Calu3 (cell line): ENCODE measurements at regions of chr22 and their contacts with region 1.

Region 1: DNA sequence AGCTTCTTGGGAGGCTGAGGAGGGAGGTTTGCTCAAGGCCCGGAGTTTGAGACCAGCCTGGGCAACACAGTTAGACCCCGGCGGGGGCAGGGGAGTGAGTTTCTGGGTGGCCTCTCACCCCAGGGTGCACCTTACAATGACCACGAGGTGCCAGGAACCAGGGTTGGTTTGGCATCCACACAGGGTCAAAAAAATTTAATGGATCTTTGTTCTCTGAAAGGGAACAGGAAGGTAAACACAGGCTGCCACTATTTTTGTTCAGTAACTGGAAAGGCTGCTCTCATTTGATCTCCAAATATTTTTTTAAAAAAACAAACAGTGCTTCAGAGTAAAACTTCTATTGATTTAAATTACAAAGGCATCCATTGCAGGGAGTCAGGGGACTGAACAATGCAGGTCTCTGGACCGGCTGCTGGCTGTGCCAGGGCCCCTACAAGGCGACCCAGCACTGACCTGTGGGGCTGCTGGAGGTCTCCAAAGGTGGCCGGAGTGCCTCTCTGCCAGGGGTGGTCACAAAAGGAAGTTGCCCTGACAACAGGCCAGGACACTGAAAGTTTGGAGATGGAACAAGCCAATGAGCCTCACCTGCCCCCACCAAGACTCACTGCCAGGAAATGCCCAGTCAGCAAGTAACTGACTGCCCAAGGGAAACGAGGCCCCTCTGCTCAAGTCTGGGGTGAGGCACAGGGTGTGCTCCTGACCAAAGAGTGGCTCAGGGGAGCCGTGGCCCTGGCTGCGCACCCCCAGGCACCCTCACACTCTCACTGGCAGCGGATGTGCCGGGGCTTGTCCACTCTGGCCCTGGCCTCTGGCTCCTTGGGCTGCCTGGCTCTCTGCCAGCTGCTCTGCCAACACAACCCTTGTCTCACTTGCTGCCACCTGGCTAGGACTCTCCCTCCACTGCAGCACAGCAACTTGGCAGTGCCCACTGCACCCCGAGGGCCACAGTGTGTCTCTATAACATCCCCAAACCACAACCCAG is 51.8 kb downstream of the ARFGAP3 start:
- DNase-seq: peak; percentile 63
- H3K4me3 Mint-ChIP-seq: peak overlapping the region; percentile 48
- H3K27ac Mint-ChIP-seq: peak overlapping the region; percentile 88
- H3K4me1 Mint-ChIP-seq: peaks cover 16% of the 10 kb centered on the region
- H3K27me3 Mint-ChIP-seq: no peaks in the 10 kb centered on the region
- CTCF ChIP-seq: no peak

Region 2: DNA sequence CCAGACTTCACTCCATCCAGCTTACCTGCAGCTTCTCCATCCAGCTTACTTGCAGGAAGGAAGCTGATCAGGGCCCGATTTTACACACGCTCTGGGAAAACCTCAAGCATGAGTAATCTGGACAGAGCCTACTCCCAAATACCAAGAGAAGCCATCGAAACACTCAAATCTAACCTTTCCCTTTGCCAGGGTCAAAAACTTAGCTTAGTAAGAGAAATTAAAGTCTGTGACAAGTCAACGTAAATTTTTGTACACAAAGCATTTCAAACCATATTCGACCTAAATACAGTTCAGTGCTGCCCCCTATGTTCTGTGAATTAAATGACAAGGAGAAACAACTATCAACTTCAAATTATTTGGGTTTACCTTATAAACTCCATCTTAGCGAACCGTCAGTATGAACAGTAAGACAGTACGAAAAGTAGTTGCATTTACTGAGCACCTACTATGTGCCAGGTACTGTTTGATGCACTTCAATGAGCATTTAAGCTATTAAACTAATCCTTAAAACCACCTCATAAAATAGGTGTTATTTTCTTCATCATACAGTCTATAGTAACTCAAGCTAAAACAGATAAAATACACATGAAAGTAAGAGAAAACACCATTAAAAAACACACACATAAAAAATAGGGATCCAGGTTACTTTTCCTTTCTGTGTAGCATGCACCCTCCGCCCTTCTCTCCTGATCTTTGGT is 14.9 kb after region 1 on chr22:
- CTCF ChIA-PET with region 1: interaction called, 4 read pairs
- intact Hi-C with region 1: loop called (anchors 2 kb)
- DNase-seq: no peak
- H3K4me3 Mint-ChIP-seq: no peak overlapping the region
- H3K27ac Mint-ChIP-seq: peak overlapping the region; percentile 64
- H3K4me1 Mint-ChIP-seq: peaks cover 19% of the 10 kb centered on the region
- H3K27me3 Mint-ChIP-seq: no peaks in the 10 kb centered on the region
- CTCF ChIP-seq: peak; percentile 13